AG04449 (cell line): ENCODE measurements at regions of chr5 and their contacts with region 1.

Region 1: GRCh38 chr5:176660860-176661641 is 13.8 kb downstream of the TSPAN17 start:
- DNase-seq: no peak
- H3K4me3 ChIP-seq: no peak overlapping the region
- CTCF ChIP-seq: peak; percentile 97

Region 2: DNA sequence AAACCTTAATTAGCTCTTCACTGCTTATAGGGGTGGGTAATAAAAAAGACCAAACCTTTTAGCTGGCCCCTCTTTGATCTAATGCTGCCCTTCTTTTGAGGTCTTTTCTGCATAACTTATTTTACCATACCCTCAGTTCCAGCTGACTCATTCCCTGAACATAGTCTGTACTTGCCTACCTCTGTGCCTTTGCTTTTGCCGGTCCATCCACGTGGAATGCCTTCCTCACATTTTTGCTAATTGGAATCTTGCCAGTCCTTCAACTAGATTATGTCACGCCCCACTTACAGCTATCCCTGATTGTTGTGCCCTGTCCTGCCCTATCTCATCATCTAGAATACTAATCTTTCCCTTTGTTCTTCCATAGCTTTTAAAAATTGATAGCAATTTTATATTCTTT is 168.6 kb before region 1 on chr5:
- CTCF ChIA-PET with region 1: no interaction called
- POLR2A ChIA-PET with region 1: no interaction called
- DNase-seq: no peak
- H3K4me3 ChIP-seq: no peak overlapping the region
- CTCF ChIP-seq: no peak

Region 3: DNA sequence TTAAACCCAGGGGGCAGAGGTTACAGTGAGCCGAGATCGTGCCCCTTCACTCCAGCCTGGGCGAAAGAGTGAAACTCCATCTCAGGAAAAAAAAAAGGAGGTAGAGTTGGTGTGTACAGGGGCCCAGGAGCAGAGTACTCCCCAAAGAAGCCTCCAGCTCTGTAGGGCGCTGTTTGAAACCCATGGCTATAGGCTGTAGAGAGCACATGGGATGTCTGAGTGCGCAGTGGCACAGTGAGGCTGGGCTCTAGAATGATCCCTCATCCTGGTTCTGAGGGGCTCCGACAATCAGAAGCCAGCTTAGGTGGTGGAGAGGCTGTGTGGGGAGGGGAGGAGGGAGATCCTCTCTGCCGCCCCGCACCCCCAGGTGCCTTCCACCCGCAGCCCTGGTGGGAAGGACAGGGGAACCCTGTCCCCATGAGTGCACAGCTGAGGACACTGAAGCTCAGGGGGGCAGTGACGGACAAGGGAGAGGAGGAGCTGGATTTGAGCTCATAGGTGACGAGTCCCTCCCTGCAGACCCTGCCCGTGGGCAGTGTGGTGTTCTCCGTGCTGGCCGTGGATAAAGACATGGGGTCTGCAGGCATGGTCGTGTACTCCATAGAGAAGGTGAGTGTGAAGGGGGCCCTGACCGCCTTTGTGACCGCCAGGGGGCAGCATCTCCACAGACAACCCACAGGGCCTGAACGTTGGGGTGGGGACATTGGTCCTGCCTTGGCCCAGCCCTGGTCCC is 87.3 kb before region 1 on chr5:
- CTCF ChIA-PET with region 1: interaction called, 19 read pairs
- POLR2A ChIA-PET with region 1: no interaction called
- DNase-seq: no peak
- H3K4me3 ChIP-seq: no peak overlapping the region
- CTCF ChIP-seq: peak; percentile 88

Region 4: GRCh38 chr5:176675675-176676360 is 14.8 kb after region 1 on chr5:
- CTCF ChIA-PET with region 1: interaction called, 55 read pairs
- POLR2A ChIA-PET with region 1: no interaction called
- DNase-seq: no peak
- H3K4me3 ChIP-seq: no peak overlapping the region
- CTCF ChIP-seq: peak; percentile 67

Region 5: DNA sequence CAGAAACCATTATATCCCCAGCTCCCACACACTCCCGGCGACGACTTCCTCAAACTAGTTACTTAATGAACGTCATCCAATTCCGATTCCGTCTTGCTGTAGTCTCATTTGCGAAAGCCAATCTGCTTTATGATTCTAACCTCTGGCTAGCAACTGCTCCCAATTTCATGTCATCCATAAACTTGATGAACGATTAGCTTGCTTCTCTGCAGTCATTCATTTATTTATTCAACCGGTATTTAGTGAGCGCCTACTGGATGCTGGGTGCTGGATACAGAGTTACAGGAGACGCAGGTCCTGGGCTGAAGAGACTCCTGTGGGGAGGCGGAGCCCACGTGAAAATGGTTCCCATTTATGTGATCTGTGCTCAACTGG is 32.4 kb after region 1 on chr5:
- CTCF ChIA-PET with region 1: interaction called, 15 read pairs
- POLR2A ChIA-PET with region 1: no interaction called
- DNase-seq: no peak
- H3K4me3 ChIP-seq: no peak overlapping the region
- CTCF ChIP-seq: no peak

Region 6: GRCh38 chr5:176934309-176934930 is 273.4 kb after region 1 on chr5:
- CTCF ChIA-PET with region 1: interaction called, 11 read pairs
- POLR2A ChIA-PET with region 1: no interaction called
- DNase-seq: no peak
- H3K4me3 ChIP-seq: no peak overlapping the region
- CTCF ChIP-seq: no peak

Region 7: DNA sequence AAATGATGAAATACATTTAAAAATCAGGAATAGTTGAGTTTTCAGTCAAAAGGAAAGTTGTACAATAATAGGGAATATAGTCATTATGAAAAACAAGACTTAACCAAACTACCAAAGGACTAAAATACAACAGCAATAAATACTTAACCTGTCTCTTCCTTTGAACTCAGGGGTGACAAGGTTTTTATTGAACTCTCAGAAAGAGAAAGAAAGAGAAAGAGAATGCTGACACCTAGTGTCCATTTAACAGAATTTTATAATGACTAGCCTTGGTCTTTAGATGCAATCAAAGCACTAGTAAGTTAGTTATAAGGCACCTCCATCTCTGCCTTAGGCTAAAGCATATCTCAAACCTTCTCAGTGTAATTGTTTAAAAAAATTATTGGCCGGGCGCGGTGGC is 298.0 kb after region 1 on chr5:
- CTCF ChIA-PET with region 1: interaction called, 13 read pairs
- POLR2A ChIA-PET with region 1: no interaction called
- DNase-seq: no peak
- H3K4me3 ChIP-seq: no peak overlapping the region
- CTCF ChIP-seq: no peak

Region 8: DNA sequence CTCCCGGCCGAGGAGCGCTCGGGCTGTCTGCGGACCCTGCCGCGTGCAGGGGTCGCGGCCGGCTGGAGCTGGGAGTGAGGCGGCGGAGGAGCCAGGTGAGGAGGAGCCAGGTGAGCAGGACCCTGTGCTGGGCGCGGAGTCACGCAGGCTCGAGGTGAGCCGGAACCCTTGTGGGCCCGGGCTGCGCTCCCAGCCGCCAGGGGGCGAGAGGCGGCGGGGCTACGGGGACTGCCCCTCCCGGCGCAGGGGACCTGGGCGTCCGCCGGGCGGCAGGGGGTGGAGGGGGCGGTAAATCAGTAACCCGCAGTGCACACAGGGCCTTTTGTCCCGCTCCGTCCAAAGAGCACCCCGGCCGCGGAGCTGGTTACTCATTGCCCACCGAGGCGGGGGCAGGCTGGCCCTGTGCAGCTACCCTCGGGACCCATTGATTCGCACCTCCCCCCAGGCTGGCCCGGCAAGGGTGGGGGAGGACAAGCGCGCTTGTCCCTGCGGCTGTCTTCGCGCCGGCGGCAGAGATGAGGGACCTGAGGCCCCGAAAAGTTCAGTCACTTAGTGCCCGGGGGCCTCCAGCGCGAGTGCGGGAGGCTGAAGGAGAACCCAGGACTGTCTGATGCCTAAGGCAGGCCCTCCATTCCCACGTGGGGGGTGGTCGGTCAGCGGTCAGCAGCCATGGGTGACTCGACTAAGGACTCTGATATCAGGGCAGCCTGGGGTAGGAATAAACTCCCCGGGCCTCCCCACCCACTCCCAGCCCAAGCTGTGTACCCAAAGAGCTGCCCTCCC is 426.1 kb after region 1 on chr5:
- CTCF ChIA-PET with region 1: interaction called, 15 read pairs
- POLR2A ChIA-PET with region 1: no interaction called
- DNase-seq: no peak
- H3K4me3 ChIP-seq: peak overlapping the region; percentile 49
- CTCF ChIP-seq: peak; percentile 56

Region 9: DNA sequence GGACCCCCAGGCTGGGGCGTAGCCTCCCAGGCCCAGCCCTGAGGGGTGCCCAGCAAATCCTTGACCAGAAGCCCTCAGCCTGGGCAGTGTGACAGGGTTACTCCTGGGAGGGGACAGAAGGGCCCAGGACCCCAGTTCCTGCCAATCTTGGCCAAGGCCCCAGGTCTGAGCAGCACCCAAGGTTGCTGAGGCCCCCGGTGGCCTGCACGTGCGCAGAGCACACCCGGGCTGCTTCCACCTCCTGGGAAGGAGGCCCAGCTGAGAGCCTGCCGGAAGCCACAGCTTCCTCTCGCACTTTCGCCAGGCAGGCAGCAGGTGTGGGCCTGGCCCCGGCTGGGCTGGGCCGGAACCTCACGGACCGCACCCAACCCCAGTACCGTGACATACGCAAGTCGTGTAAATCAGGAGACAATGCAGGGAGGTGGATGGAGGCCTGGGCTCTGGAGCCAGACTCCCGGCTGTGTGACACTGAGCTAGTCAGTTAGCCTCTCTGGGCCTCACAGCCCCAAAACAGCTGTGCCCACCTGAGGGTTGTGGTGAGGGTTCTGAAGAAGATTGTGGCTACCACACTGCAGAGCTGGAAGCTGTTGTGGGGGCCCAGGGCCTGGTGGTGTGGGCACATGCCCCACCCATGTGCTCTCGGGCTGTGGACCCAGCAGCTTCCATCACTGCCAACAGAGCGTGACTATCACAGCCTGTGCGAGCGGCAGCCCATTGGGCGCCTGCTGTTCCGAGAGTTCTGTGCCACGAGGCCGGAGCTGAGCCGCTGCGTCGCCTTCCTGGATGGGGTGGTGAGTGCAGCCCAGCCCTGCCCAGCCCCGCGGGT is 770.5 kb after region 1 on chr5:
- CTCF ChIA-PET with region 1: no interaction called
- POLR2A ChIA-PET with region 1: no interaction called
- DNase-seq: no peak
- H3K4me3 ChIP-seq: no peak overlapping the region
- CTCF ChIP-seq: no peak